ENCODE measurements at regions of chrX and their contacts with region 1.

Region 1: DNA sequence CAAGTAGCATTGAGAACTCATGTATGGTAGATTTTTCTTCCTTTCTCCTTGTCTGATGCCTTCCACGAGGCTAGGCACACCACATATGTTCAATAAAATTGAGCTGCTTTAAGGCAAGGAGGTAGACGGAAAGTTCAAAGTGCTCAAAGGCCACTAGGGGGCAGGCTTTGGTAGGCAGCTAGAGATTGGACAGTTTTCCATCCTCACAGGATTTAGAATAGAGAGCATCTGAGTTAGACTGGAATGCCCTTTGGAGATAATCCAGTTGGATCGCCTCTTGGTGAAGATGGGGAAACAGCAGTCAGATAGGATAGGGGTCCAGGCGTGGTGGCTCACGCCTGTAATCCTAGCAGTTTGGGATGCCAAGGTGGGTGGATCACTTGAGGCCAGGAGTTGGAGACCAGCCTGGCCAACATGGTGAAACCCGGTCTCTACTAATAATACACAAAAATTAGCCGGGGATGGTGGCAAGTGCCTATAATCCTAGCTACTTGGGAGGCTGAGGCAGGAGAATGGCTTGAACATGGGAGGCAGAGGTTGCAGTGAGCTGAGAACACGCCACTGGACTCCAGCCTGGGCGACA is 30.4 kb downstream of the ELF4 start:
- DNase-seq: peak; percentile 21 to 80 (median 44)
- ATAC-seq: no peak
- H3K4me3 ChIP-seq: no peak overlapping the region
- H3K4me3 Mint-ChIP-seq: peak overlapping the region; percentile 34
- H3K27ac ChIP-seq: no peak overlapping the region
- H3K27ac Mint-ChIP-seq: peak overlapping the region; percentile 75
- H3K4me1 ChIP-seq: peaks cover 54% of the 10 kb centered on the region
- H3K4me1 Mint-ChIP-seq: peaks cover 42% of the 10 kb centered on the region
- H3K27me3 ChIP-seq: no peaks in the 10 kb centered on the region
- H3K27me3 Mint-ChIP-seq: no peaks in the 10 kb centered on the region
- CTCF ChIP-seq: peak; percentile 66

Region 2: GRCh38 chrX:130091958-130092522 is 12.1 kb after region 1 on chrX:
- CTCF ChIA-PET with region 1: interaction called, 22 read pairs
- POLR2A ChIA-PET with region 1: interaction called, 14 read pairs
- intact Hi-C with region 1: no loop called
- DNase-seq: peak; percentile 62 to 95 (median 82)
- ATAC-seq: peak; percentile 97
- H3K4me3 ChIP-seq: peak overlapping the region; percentile 63
- H3K4me3 Mint-ChIP-seq: peak overlapping the region; percentile 92
- H3K27ac ChIP-seq: peak overlapping the region; percentile 55 to 68
- H3K27ac Mint-ChIP-seq: peak overlapping the region; percentile 96
- H3K4me1 ChIP-seq: peaks cover 91% of the 10 kb centered on the region
- H3K4me1 Mint-ChIP-seq: peaks cover 56% of the 10 kb centered on the region
- H3K27me3 ChIP-seq: no peaks in the 10 kb centered on the region
- H3K27me3 Mint-ChIP-seq: no peaks in the 10 kb centered on the region
- CTCF ChIP-seq: peak; percentile 21

Region 3: DNA sequence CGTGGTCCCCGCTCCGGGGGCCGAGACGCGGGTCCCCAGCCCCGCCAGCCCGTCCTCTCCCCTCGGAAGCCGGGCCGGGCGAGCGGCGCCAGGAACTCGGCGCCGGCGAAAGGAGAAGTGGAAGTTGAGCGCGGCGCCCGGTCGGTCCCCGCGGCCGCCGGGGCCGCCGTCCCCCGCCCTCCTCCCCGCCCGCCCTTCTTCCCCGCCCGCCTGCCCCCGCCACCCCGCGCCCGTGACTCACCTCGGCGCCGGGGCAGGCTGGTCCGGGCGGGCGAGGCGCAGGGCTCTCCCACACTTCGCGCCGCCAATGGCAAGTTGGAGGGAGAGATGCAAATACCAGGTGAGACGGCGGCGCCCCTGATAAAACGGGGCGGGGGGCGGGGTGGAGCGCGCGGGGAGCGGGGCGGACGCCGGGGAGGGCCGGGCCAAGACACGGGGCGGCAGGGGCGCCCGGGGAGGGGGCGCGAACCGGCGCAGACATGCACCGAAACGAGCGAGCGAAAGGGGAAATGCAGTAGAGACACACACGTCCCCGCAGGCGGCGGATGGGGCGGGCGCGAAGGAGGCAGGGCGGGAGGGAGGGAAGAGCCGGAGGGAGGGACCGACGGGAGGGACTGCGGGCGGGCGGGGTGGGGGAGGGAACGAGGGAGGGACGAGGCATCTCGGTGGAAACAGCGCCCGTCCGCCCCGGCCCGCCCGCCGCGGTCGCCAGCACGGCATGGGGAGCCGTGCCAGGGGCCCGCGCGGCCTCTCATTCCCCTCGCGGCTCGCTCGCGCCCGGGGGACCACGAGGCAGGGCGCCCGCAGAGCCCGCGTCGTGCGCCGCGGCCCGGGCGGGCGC is 30.7 kb after region 1 on chrX and contains the start of gene ELF4:
- CTCF ChIA-PET with region 1: interaction called, 6 read pairs
- POLR2A ChIA-PET with region 1: interaction called, 15 read pairs
- intact Hi-C with region 1: loop called in 1 of 2 experiments (anchors 2 kb)
- DNase-seq: peak in 12 of 14 experiments; percentile 19 to 85 (median 57)
- ATAC-seq: peak; percentile 76
- H3K4me3 ChIP-seq: peak within 1 kb of the TSS; percentile 83
- H3K4me3 Mint-ChIP-seq: peak within 1 kb of the TSS; percentile 95
- H3K27ac ChIP-seq: peak within 1 kb of the TSS; percentile 50 to 52
- H3K27ac Mint-ChIP-seq: peak within 1 kb of the TSS; percentile 82
- H3K4me1 ChIP-seq: peaks cover 37% of the 10 kb centered on the region
- H3K4me1 Mint-ChIP-seq: peaks cover 25% of the 10 kb centered on the region
- H3K27me3 ChIP-seq: no peaks in the 10 kb centered on the region
- H3K27me3 Mint-ChIP-seq: no peaks in the 10 kb centered on the region
- CTCF ChIP-seq: no peak
- total RNA-seq, gene ELF4: 17.3 to 17.4 TPM

Region 4: GRCh38 chrX:130120746-130121504 is 41.0 kb after region 1 on chrX:
- CTCF ChIA-PET with region 1: interaction called, 76 read pairs
- POLR2A ChIA-PET with region 1: interaction called, 9 read pairs
- intact Hi-C with region 1: loop called (anchors 1 to 2 kb)
- DNase-seq: peak; percentile 39 to 83 (median 58)
- ATAC-seq: peak; percentile 89
- H3K4me3 ChIP-seq: peak overlapping the region; percentile 56
- H3K4me3 Mint-ChIP-seq: peak overlapping the region; percentile 56
- H3K27ac ChIP-seq: no peak overlapping the region
- H3K27ac Mint-ChIP-seq: no peak overlapping the region
- H3K4me1 ChIP-seq: peaks cover 31% of the 10 kb centered on the region
- H3K4me1 Mint-ChIP-seq: peaks cover 5% of the 10 kb centered on the region
- H3K27me3 ChIP-seq: no peaks in the 10 kb centered on the region
- H3K27me3 Mint-ChIP-seq: no peaks in the 10 kb centered on the region
- CTCF ChIP-seq: peak; percentile 71

Region 5: GRCh38 chrX:130196466-130196865 is 116.6 kb after region 1 on chrX:
- CTCF ChIA-PET with region 1: interaction called, 13 read pairs
- POLR2A ChIA-PET with region 1: no interaction called
- intact Hi-C with region 1: loop called (anchors 1 kb)
- DNase-seq: no peak
- ATAC-seq: no peak
- H3K4me3 ChIP-seq: no peak overlapping the region
- H3K4me3 Mint-ChIP-seq: no peak overlapping the region
- H3K27ac ChIP-seq: no peak overlapping the region
- H3K27ac Mint-ChIP-seq: no peak overlapping the region
- H3K4me1 ChIP-seq: no peaks in the 10 kb centered on the region
- H3K4me1 Mint-ChIP-seq: peaks cover 5% of the 10 kb centered on the region
- H3K27me3 ChIP-seq: no peaks in the 10 kb centered on the region
- H3K27me3 Mint-ChIP-seq: no peaks in the 10 kb centered on the region
- CTCF ChIP-seq: no peak

Region 6: GRCh38 chrX:130916636-130917422 is 836.9 kb after region 1 on chrX:
- CTCF ChIA-PET with region 1: interaction called, 3 read pairs
- POLR2A ChIA-PET with region 1: no interaction called
- intact Hi-C with region 1: loop called in 1 of 2 experiments (anchors 5 kb)
- DNase-seq: peak; percentile 4 to 75 (median 18)
- ATAC-seq: peak; percentile 56
- H3K4me3 ChIP-seq: no peak overlapping the region
- H3K4me3 Mint-ChIP-seq: no peak overlapping the region
- H3K27ac ChIP-seq: no peak overlapping the region
- H3K27ac Mint-ChIP-seq: no peak overlapping the region
- H3K4me1 ChIP-seq: no peaks in the 10 kb centered on the region
- H3K4me1 Mint-ChIP-seq: no peaks in the 10 kb centered on the region
- H3K27me3 ChIP-seq: no peaks in the 10 kb centered on the region
- H3K27me3 Mint-ChIP-seq: peaks cover 4% of the 10 kb centered on the region
- CTCF ChIP-seq: peak; percentile 57